ENCODE measurements at regions of chr5 and their contacts with region 1.

Region 1: DNA sequence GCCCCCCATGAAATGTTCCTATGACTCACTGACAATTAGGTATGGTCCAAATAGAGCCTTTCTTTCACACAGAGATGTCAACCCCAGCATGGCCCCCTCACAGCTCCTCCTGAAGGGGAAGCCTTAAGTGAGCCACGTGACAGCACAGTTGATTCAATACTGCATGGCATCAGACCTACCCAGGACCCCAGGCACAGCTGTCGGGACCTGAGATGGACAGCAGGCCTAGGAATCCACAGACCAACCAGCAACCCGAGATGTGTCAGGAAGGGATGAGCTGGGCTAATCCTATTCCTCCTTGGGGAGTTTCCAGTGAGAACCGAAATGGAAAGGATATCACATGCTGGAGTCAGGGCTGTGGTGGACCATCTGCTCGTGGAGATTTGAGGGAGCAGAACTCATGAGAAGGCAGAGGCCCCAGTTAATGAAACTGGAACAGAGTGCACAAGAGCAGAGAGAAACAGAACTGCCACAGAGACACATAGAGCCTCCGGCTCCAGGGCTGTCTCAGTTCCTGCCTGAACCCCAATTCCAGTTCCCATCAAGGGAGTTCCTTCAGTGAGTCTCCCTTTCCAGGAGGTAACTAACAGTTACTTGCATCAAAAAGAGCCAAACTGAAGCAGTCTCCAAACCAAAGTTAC is 42.1 kb upstream of the SMIM23 start:
- DNase-seq: no peak
- ATAC-seq: no peak

Region 2: GRCh38 chr5:171295299-171295698 is 448.3 kb before region 1 on chr5:
- intact Hi-C with region 1: no loop called
- DNase-seq: no peak
- ATAC-seq: no peak

Region 3: GRCh38 chr5:171840066-171840465 is 96.5 kb after region 1 on chr5:
- intact Hi-C with region 1: loop called in 1 of 2 experiments (anchors 5 kb)
- DNase-seq: no peak
- ATAC-seq: no peak

Region 4: GRCh38 chr5:171874234-171874633 is 130.7 kb after region 1 on chr5:
- intact Hi-C with region 1: no loop called
- DNase-seq: no peak
- ATAC-seq: peak in 1 of 2 donors; percentile 61

Region 5: GRCh38 chr5:171893290-171893886 is 149.8 kb after region 1 on chr5:
- intact Hi-C with region 1: no loop called
- DNase-seq: no peak
- ATAC-seq: peak in 1 of 2 donors; percentile 38

Region 6: GRCh38 chr5:171907725-171908343 is 164.3 kb after region 1 on chr5:
- intact Hi-C with region 1: no loop called
- DNase-seq: peak; percentile 40
- ATAC-seq: peak; percentile 80

Measured in left cardiac atrium (tissue), 4 donors.